ENCODE measurements at regions of chr9 and their contacts with region 1.

Region 1: DNA sequence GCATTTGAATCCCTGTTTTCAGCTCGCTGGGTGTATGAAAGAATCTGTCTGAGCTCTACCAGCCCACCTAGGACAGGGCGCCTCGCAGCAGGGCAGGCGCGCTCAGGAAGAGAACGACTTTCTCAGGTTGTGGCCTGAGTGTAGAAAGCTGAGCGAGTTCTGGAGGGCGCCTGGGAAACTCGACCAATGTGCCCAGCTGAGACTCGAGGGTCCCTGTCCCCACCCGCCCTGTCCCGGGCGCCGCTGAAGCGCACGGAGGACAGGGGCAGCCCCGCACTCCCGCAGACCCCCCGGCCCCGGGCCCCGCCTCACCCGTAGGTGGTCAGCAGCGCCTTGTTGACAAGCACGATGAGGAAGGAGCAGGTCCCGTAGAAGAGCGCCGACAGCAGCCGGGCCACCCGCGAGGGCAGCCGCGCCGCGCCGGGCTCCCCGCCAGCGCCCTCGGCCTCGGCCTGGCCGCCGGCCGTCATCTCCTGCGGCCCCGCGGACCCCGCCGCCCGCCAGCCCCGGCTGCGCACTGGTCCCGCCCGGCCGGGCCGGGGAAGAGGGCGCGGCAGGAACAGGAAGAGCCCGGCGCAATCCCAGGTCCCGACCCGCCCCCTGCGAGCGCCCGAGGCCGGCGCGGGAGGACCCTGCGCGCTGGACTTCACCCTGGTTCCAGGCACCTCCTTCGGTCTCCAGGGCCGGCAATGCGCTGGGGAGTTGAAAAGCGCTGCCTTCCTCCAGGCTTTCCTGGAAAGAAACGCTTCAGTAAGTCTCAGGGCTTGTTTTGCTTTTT is at the start of gene SLC35D2:
- DNase-seq: peak; percentile 86
- H3K4me3 ChIP-seq: peak within 1 kb of the TSS; percentile 54
- H3K27ac ChIP-seq: peak within 1 kb of the TSS; percentile 67
- H3K4me1 ChIP-seq: no peaks in the 10 kb centered on the region
- H3K27me3 ChIP-seq: no peaks in the 10 kb centered on the region
- CTCF ChIP-seq: no peak
- total RNA-seq, gene SLC35D2: 57.8 to 95.0 TPM

Region 2: DNA sequence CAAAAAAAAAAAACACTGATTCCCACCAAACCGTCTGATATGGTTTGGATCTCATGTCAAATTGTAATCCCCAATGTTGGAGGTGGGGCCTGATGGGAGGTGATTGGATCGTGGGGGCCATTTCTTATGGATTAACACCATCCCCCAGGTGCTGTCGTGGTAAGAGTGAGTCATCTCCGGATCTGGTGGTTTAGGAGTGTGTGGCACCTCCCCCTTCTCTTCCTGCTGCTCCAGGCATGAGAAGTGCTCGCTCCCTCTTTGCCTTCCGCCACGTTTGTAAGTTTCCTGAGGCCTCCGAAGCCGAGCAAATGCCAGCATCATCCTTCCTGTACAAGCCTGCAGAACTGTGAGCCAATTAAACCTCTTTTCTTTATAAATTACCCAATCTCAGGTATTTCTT is 126.6 kb before region 1 on chr9:
- intact Hi-C with region 1: no loop called
- DNase-seq: no peak
- H3K4me3 ChIP-seq: no peak overlapping the region
- H3K27ac ChIP-seq: no peak overlapping the region
- H3K4me1 ChIP-seq: no peaks in the 10 kb centered on the region
- H3K27me3 ChIP-seq: no peaks in the 10 kb centered on the region
- CTCF ChIP-seq: no peak

Region 3: DNA sequence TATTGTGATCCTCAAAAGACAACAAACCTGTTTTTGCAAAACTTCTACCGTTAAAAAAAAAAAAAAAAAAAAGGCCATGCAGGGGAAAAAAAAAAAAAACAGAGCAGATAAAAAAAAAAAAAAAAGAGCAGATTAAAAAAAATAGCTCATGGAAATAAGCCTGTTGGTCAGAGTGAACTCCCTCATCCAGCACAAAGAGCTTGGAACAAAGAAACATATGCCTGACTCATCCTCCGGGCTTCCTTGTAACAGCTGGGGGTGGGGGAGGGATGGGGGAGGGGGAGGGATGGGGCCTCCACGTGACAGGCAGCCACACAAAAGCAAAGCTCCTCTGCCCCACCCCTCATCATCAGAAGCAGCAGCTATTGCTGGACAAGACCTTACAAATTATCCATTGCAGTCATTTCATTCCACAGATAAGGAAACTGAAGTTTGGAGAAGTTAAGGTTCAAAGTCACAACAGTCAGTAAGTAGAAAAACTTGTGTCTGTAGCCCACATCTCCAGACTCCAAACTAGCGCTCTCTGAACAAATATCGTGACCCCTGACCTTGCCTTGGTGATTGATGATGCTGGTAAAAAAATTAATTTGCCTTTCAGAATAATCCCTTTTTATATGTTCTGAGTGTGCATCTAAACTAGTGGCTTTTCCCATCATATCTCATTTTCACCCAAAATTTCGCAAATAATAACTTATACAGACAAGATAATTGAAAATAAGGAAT is 38.7 kb before region 1 on chr9:
- intact Hi-C with region 1: loop called (anchors 5 kb)
- DNase-seq: peak; percentile 62
- H3K4me3 ChIP-seq: no peak overlapping the region
- H3K27ac ChIP-seq: peak overlapping the region; percentile 34
- H3K4me1 ChIP-seq: peaks cover 6% of the 10 kb centered on the region
- H3K27me3 ChIP-seq: no peaks in the 10 kb centered on the region
- CTCF ChIP-seq: no peak

Region 4: GRCh38 chr9:96449845-96450612 is 66.7 kb after region 1 on chr9 and contains the start of gene HABP4:
- intact Hi-C with region 1: no loop called
- DNase-seq: peak; percentile 96
- H3K4me3 ChIP-seq: peak within 1 kb of the TSS; percentile 67
- H3K27ac ChIP-seq: no peak within 1 kb of the TSS
- H3K4me1 ChIP-seq: no peaks in the 10 kb centered on the region
- H3K27me3 ChIP-seq: no peaks in the 10 kb centered on the region
- CTCF ChIP-seq: no peak
- total RNA-seq, gene HABP4: 2.8 to 4.4 TPM

Measured in colonic mucosa (tissue), 4 donors.